ENCODE measurements at regions of chr1 and their contacts with region 1.

Region 1: GRCh38 chr1:211613093-211613947 is 34.4 kb upstream of the SLC30A1 start:
- DNase-seq: peak; percentile 100
- H3K4me3 Mint-ChIP-seq: peak overlapping the region; percentile 33
- H3K27ac Mint-ChIP-seq: peak overlapping the region; percentile 61
- H3K4me1 Mint-ChIP-seq: peaks cover 37% of the 10 kb centered on the region
- H3K27me3 Mint-ChIP-seq: no peaks in the 10 kb centered on the region
- CTCF ChIP-seq: no peak

Region 2: GRCh38 chr1:211589782-211590721 is 23.3 kb before region 1 on chr1:
- CTCF ChIA-PET with region 1: interaction called, 10 read pairs
- POLR2A ChIA-PET with region 1: interaction called, 6 read pairs
- intact Hi-C with region 1: loop called (anchors 2 kb)
- DNase-seq: peak; percentile 95
- H3K4me3 Mint-ChIP-seq: no peak overlapping the region
- H3K27ac Mint-ChIP-seq: peak overlapping the region; percentile 65
- H3K4me1 Mint-ChIP-seq: peaks cover 30% of the 10 kb centered on the region
- H3K27me3 Mint-ChIP-seq: no peaks in the 10 kb centered on the region
- CTCF ChIP-seq: no peak

Region 3: GRCh38 chr1:211648980-211649934 is 35.9 kb after region 1 on chr1:
- CTCF ChIA-PET with region 1: interaction called, 36 read pairs
- POLR2A ChIA-PET with region 1: interaction called, 81 read pairs
- intact Hi-C with region 1: no loop called
- DNase-seq: no peak
- H3K4me3 Mint-ChIP-seq: no peak overlapping the region
- H3K27ac Mint-ChIP-seq: peak overlapping the region; percentile 1
- H3K4me1 Mint-ChIP-seq: peaks cover 37% of the 10 kb centered on the region
- H3K27me3 Mint-ChIP-seq: no peaks in the 10 kb centered on the region
- CTCF ChIP-seq: peak; percentile 22